ENCODE measurements at regions of chr9 and their contacts with region 1.

Region 1: GRCh38 chr9:10255758-10256157 is 357.0 kb downstream of the PTPRD start:
- DNase-seq: no peak
- ATAC-seq: no peak
- H3K4me3 ChIP-seq: no peak overlapping the region
- H3K27ac ChIP-seq: no peak overlapping the region
- H3K4me1 ChIP-seq: no peaks in the 10 kb centered on the region
- H3K27me3 ChIP-seq: no peaks in the 10 kb centered on the region
- CTCF ChIP-seq: no peak

Region 2: DNA sequence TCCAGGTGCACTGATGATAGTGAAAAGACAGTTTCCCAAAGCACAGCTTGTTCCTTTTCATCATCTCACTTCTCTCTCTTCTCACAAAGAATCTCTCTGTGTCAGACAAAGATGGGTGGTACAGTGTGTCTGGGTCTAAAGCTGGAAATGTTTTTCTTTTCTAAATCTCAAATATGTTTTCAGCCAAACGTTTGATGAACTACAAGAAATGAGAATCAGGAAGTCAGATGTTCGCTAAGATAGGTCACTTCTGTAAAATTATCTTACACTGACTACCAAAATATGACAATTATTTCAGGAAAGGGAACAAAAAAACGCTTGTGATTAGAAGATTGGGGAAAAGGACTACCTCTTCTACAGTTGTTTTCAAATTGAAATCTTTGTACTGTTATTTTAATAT is 351.7 kb before region 1 on chr9:
- intact Hi-C with region 1: no loop called
- DNase-seq: no peak
- ATAC-seq: no peak
- H3K4me3 ChIP-seq: no peak overlapping the region
- H3K27ac ChIP-seq: no peak overlapping the region
- H3K4me1 ChIP-seq: no peaks in the 10 kb centered on the region
- H3K27me3 ChIP-seq: no peaks in the 10 kb centered on the region
- CTCF ChIP-seq: no peak

Region 3: DNA sequence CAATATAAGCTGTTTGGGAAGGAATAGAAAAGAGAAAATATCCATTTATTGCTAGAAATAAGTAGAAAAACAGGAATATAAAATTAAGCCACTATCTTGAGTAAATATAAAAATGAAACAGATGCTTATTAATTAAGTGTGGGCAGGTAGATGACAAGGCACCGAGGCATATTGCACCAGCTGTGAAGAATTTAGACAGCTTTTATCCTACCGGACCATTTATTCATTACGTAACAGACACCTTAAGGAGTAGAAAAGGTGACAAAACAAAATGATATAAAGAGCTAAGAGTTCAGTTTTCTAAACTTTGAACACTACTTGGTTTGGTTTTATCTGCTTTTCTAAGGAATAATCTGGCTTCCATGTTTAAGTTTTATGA is 47.1 kb before region 1 on chr9:
- intact Hi-C with region 1: loop called in 1 of 2 experiments (anchors 5 kb)
- DNase-seq: no peak
- ATAC-seq: no peak
- H3K4me3 ChIP-seq: peak overlapping the region; percentile 55
- H3K27ac ChIP-seq: no peak overlapping the region
- H3K4me1 ChIP-seq: no peaks in the 10 kb centered on the region
- H3K27me3 ChIP-seq: no peaks in the 10 kb centered on the region
- CTCF ChIP-seq: no peak

Region 4: DNA sequence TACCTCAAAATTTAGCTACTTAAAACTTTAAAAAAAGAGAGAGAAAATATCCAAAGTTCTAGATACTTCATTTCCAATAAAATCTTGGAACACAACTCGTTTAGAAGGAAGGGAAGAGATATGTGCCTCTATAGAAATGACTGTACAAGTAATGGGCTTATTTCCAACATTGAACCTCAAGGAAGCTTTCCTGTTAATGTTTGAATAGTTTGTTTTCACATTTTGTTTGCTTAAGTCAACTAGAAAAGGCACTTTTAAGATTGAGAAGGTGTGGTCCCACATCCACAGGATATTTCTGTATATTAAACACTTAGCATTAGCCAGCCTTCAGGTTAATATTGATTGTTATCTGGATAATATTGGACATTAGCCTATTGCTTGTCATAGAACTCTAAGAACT is 27.7 kb before region 1 on chr9:
- intact Hi-C with region 1: no loop called
- DNase-seq: no peak
- ATAC-seq: no peak
- H3K4me3 ChIP-seq: no peak overlapping the region
- H3K27ac ChIP-seq: no peak overlapping the region
- H3K4me1 ChIP-seq: no peaks in the 10 kb centered on the region
- H3K27me3 ChIP-seq: no peaks in the 10 kb centered on the region
- CTCF ChIP-seq: no peak